ENCODE measurements at regions of chr1 and their contacts with region 1.

Region 1: GRCh38 chr1:11337580-11338073 is 64.6 kb downstream of the UBIAD1 start:
- DNase-seq: no peak
- H3K4me3 ChIP-seq: no peak overlapping the region
- H3K27ac ChIP-seq: no peak overlapping the region
- H3K4me1 ChIP-seq: peaks cover 10% of the 10 kb centered on the region
- H3K27me3 ChIP-seq: no peaks in the 10 kb centered on the region
- CTCF ChIP-seq: peak; percentile 46 to 66

Region 2: GRCh38 chr1:11373895-11374747 is 36.5 kb after region 1 on chr1:
- CTCF ChIA-PET with region 1: no interaction called
- dilution Hi-C with region 1: loop called (anchors 5 kb)
- in situ Hi-C with region 1: no loop called
- intact Hi-C with region 1: no loop called
- DNase-seq: no peak
- H3K4me3 ChIP-seq: no peak overlapping the region
- H3K27ac ChIP-seq: no peak overlapping the region
- H3K4me1 ChIP-seq: peaks cover 12% of the 10 kb centered on the region
- H3K27me3 ChIP-seq: no peaks in the 10 kb centered on the region
- CTCF ChIP-seq: no peak

Region 3: GRCh38 chr1:11441211-11441952 is 103.8 kb after region 1 on chr1:
- CTCF ChIA-PET with region 1: no interaction called
- dilution Hi-C with region 1: loop called (anchors 5 kb)
- in situ Hi-C with region 1: no loop called
- intact Hi-C with region 1: no loop called
- DNase-seq: no peak
- H3K4me3 ChIP-seq: no peak overlapping the region
- H3K27ac ChIP-seq: no peak overlapping the region
- H3K4me1 ChIP-seq: no peaks in the 10 kb centered on the region
- H3K27me3 ChIP-seq: no peaks in the 10 kb centered on the region
- CTCF ChIP-seq: no peak